ENCODE measurements at regions of chr11 and their contacts with region 1.

Region 1: DNA sequence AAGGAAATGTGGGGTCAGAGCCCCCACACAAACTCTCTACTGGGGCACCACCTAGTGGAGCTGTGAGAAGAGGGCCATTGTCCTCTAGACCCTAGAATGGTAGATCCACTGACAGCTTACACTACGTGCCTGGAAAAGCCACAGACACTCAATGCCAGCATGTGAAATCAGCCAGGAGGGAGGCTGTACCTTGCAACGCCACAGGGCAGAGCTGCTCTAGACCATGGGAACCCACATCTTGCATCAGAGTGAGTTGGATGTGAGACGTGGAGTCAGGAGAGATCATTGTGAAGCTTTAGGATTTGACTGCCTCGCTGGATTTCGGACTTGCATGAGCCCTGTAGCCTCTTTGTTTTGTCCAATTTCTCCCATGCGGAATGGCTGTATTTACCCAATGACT is 453.1 kb upstream of the CHORDC1 start:
- DNase-seq: no peak
- H3K4me3 ChIP-seq: no peak overlapping the region
- H3K4me3 Mint-ChIP-seq: no peak overlapping the region
- H3K27ac Mint-ChIP-seq: no peak overlapping the region
- H3K4me1 ChIP-seq: no peaks in the 10 kb centered on the region
- H3K4me1 Mint-ChIP-seq: no peaks in the 10 kb centered on the region
- H3K27me3 ChIP-seq: no peaks in the 10 kb centered on the region
- H3K27me3 Mint-ChIP-seq: no peaks in the 10 kb centered on the region
- CTCF ChIP-seq: no peak

Region 2: GRCh38 chr11:90476442-90477007 is 199.5 kb before region 1 on chr11:
- CTCF ChIA-PET with region 1: no interaction called
- POLR2A ChIA-PET with region 1: no interaction called
- intact Hi-C with region 1: no loop called
- DNase-seq: peak in 1 of 2 experiments; percentile 53
- H3K4me3 ChIP-seq: no peak overlapping the region
- H3K4me3 Mint-ChIP-seq: no peak overlapping the region
- H3K27ac Mint-ChIP-seq: no peak overlapping the region
- H3K4me1 ChIP-seq: 0 out of 2 replicates have a peak, but pooled peaks cover 3% of the 10 kb centered on the region
- H3K4me1 Mint-ChIP-seq: peaks cover 11% of the 10 kb centered on the region
- H3K27me3 ChIP-seq: no peaks in the 10 kb centered on the region
- H3K27me3 Mint-ChIP-seq: no peaks in the 10 kb centered on the region
- CTCF ChIP-seq: peak; percentile 77 to 86

Region 3: DNA sequence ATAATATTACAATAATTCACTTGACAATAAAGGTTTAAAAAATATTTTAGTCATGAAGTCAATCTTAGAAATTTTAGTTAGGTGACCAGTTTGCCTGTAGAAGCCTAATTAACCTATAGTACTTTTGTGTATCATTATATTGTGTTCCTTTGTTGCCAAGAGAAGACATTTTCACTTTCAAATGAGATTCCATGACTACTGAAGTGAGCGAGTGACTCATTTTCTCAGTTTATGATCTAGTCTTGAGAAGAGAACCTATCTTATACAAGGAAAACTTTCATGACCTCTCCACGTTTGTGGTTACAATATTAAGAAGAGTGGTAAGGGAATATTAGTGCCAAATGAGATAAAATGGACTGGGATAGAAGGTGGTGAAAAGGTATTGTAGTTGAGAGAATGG is 29.3 kb before region 1 on chr11:
- CTCF ChIA-PET with region 1: no interaction called
- POLR2A ChIA-PET with region 1: no interaction called
- intact Hi-C with region 1: no loop called
- DNase-seq: no peak
- H3K4me3 ChIP-seq: no peak overlapping the region
- H3K4me3 Mint-ChIP-seq: no peak overlapping the region
- H3K27ac Mint-ChIP-seq: no peak overlapping the region
- H3K4me1 ChIP-seq: no peaks in the 10 kb centered on the region
- H3K4me1 Mint-ChIP-seq: no peaks in the 10 kb centered on the region
- H3K27me3 ChIP-seq: no peaks in the 10 kb centered on the region
- H3K27me3 Mint-ChIP-seq: peaks cover 3% of the 10 kb centered on the region
- CTCF ChIP-seq: no peak

Region 4: DNA sequence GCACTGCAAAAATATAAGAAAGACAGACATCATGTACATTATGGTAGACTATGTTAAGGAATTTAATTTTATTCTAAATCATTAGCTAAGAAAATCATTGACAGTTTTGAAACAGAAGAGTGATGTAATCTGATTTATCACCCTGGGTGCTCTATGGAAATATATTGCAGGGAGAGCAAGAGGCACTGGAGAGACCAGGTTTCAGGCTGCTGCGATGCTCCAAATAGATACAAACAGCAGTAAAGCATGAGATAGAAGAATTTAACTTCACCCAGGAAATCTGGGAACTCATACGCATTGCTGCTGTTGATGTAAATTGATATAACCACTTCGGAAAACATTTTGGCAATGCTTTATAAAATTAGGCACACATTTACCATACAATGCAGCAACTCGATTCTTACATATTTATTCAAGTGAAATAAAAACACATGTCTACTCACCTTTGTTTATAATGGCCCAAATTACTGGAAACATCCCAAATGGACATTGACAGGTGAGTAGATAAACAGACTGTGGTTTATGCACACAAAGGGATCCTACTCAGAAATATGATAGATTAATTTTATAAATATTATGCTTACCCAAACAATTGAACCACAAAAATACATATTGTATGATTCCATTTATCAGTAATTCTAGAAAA is 82.0 kb after region 1 on chr11:
- CTCF ChIA-PET with region 1: no interaction called
- POLR2A ChIA-PET with region 1: no interaction called
- intact Hi-C with region 1: no loop called
- DNase-seq: no peak
- H3K4me3 ChIP-seq: no peak overlapping the region
- H3K4me3 Mint-ChIP-seq: no peak overlapping the region
- H3K27ac Mint-ChIP-seq: no peak overlapping the region
- H3K4me1 ChIP-seq: no peaks in the 10 kb centered on the region
- H3K4me1 Mint-ChIP-seq: no peaks in the 10 kb centered on the region
- H3K27me3 ChIP-seq: no peaks in the 10 kb centered on the region
- H3K27me3 Mint-ChIP-seq: no peaks in the 10 kb centered on the region
- CTCF ChIP-seq: no peak

Region 5: DNA sequence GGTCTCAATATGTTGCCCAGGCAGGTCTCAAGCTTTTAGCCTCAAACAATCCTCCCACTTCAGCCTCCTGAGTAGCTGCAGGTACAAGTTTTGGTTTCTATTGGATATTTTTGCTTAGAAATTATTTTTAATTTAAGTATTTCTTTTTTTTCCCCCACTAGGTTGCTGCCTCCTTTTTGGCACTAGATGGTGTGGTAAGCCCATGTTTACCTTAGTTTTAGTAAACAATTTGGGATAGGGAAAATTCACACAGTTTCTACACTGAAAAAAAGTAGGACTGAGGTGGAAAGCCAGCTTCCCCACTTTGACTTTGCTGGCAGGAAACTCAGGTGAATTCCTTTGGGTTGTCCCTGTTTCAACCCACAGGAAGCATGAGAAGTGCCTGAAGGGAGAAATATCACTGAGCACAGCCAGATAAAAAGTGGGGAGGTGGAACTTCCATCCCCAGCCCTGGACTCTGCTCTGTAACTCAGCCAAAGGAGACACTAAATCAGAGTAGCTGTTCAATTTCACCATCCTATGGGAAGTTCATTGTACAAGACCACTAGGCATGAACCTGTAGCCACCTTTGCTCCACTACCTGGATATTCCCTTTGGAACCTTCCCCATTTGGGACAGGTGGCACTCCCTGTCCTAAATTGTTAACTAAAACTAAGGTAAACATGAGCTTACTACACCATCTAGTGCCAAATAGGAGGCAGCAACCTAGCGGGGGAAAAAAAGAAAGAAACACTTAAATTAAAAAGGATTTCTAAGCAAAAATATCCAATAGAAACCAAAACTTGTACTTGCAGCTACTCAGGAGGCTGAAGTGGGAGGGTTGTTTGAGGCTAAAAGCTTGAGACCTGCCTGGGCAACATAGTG is 1394.3 kb after region 1 on chr11:
- CTCF ChIA-PET with region 1: no interaction called
- POLR2A ChIA-PET with region 1: no interaction called
- intact Hi-C with region 1: loop called (anchors 10 kb)
- DNase-seq: no peak
- H3K4me3 ChIP-seq: no peak overlapping the region
- H3K4me3 Mint-ChIP-seq: no peak overlapping the region
- H3K27ac Mint-ChIP-seq: no peak overlapping the region
- H3K4me1 ChIP-seq: no peaks in the 10 kb centered on the region
- H3K4me1 Mint-ChIP-seq: no peaks in the 10 kb centered on the region
- H3K27me3 ChIP-seq: no peaks in the 10 kb centered on the region
- H3K27me3 Mint-ChIP-seq: peaks cover 4% of the 10 kb centered on the region
- CTCF ChIP-seq: peak in 1 of 2 experiments; percentile 18